Naive thymus-derived CD4-positive, alpha-beta T cell (primary cell): ENCODE measurements at regions of chr22 and their contacts with region 1.

Region 1: GRCh38 chr22:41966607-41967240 is 2.5 kb upstream of the SEPTIN3 start:
- DNase-seq: peak in 6 of 9 donors; percentile 20 to 59 (median 48)
- ATAC-seq: peak; percentile 84
- H3K4me3 ChIP-seq: no peak overlapping the region
- H3K4me3 Mint-ChIP-seq: no peak overlapping the region
- H3K27ac ChIP-seq: no peak overlapping the region
- H3K27ac Mint-ChIP-seq: peak overlapping the region in 1 of 9 donors; percentile 72
- H3K4me1 ChIP-seq: no peaks in the 10 kb centered on the region
- H3K4me1 Mint-ChIP-seq: peaks cover 0 to 9% (median 0%) of the 10 kb centered on the region in 7 donors
- H3K27me3 ChIP-seq: no peaks in the 10 kb centered on the region
- H3K27me3 Mint-ChIP-seq: peaks cover 0 to 9% (median 0%) of the 10 kb centered on the region in 5 donors

Region 2: GRCh38 chr22:41995211-41995610 is 28.5 kb after region 1 on chr22:
- CTCF ChIA-PET with region 1: no interaction called
- POLR2A ChIA-PET with region 1: no interaction called
- intact Hi-C with region 1: no loop called
- DNase-seq: no peak
- ATAC-seq: no peak
- H3K4me3 ChIP-seq: no peak overlapping the region
- H3K4me3 Mint-ChIP-seq: no peak overlapping the region
- H3K27ac ChIP-seq: no peak overlapping the region
- H3K27ac Mint-ChIP-seq: peak overlapping the region in 2 of 9 donors; percentile 15 to 25
- H3K4me1 ChIP-seq: peaks cover 6 to 7% of the 10 kb centered on the region in 2 donors
- H3K4me1 Mint-ChIP-seq: peaks cover 9 to 26% (median 21%) of the 10 kb centered on the region in 7 donors
- H3K27me3 ChIP-seq: no peaks in the 10 kb centered on the region
- H3K27me3 Mint-ChIP-seq: peaks cover 0 to 9% (median 0%) of the 10 kb centered on the region in 5 donors

Region 3: DNA sequence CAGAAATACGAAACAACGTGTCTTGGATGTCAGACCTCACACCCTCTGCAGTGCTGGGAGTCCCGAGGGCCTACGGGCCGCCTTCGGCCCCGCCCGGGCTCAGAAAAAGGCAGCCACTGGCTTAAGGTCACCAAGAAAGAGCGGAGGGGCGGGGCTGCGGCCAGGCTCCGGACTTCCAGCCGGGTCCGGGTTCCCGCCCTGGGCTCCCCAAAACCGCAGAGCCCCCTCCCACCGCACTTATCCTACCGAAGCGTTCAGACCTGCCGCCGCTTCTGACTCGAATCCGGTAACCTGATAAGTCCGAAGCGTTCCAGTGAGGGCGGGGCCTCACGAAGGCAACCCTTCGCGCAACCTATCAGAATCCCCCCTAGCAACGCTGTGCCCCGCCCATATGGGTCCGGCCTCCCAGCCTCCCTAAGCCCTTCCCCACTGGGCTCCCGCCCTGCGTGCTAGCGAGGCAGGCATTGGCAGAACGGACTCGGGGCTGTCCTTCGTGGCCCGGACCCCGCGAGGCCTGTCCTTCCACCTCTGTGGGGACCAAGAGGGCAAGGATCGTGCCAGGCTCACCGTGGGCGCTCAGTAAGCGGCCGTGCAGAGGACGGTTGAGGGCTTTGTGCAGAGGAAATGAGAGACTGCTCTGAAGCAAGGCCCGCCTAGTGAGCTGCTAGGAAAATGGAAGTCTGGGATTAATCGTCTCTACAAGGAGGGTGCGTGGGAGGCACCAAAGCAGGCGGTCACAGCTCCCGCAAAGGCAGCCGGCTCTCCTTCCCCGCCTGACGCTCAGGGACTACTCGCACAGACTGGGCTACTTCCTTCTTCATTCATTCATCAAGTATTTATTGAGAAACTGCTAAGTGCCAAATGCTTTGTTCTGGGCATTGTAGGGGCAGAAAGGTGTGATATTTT is 104.0 kb after region 1 on chr22 and contains the start of gene NAGA:
- CTCF ChIA-PET with region 1: no interaction called
- POLR2A ChIA-PET with region 1: no interaction called
- intact Hi-C with region 1: loop called (anchors 2 to 5 kb)
- DNase-seq: peak; percentile 79 to 91 (median 88)
- ATAC-seq: peak; percentile 99
- H3K4me3 ChIP-seq: peak within 1 kb of the TSS; percentile 75
- H3K4me3 Mint-ChIP-seq: peak within 1 kb of the TSS; percentile 86 to 96 (median 94)
- H3K27ac ChIP-seq: peak within 1 kb of the TSS; percentile 75
- H3K27ac Mint-ChIP-seq: peak within 1 kb of the TSS; percentile 81 to 94 (median 92)
- H3K4me1 ChIP-seq: peaks cover 16 to 22% of the 10 kb centered on the region in 2 donors
- H3K4me1 Mint-ChIP-seq: peaks cover 22 to 54% (median 45%) of the 10 kb centered on the region in 7 donors
- H3K27me3 ChIP-seq: no peaks in the 10 kb centered on the region
- H3K27me3 Mint-ChIP-seq: no peaks in the 10 kb centered on the region
- total RNA-seq, gene NAGA: 7.6 to 38.8 (median 9.4) TPM

Region 4: GRCh38 chr22:42079319-42080251 is 112.9 kb after region 1 on chr22 and contains the start of gene SMDT1:
- CTCF ChIA-PET with region 1: no interaction called
- POLR2A ChIA-PET with region 1: no interaction called
- intact Hi-C with region 1: loop called (anchors 2 to 5 kb)
- DNase-seq: peak; percentile 96 to 100 (median 99)
- ATAC-seq: peak; percentile 94
- H3K4me3 ChIP-seq: peak within 1 kb of the TSS; percentile 98
- H3K4me3 Mint-ChIP-seq: peak within 1 kb of the TSS; percentile 94 to 99 (median 96)
- H3K27ac ChIP-seq: peak within 1 kb of the TSS; percentile 97
- H3K27ac Mint-ChIP-seq: peak within 1 kb of the TSS; percentile 96 to 99 (median 99)
- H3K4me1 ChIP-seq: peaks cover 10 to 16% of the 10 kb centered on the region in 2 donors
- H3K4me1 Mint-ChIP-seq: peaks cover 9 to 52% (median 43%) of the 10 kb centered on the region in 7 donors
- H3K27me3 ChIP-seq: no peaks in the 10 kb centered on the region
- H3K27me3 Mint-ChIP-seq: no peaks in the 10 kb centered on the region
- total RNA-seq, gene SMDT1: 40.4 to 105 (median 98.8) TPM

Region 5: DNA sequence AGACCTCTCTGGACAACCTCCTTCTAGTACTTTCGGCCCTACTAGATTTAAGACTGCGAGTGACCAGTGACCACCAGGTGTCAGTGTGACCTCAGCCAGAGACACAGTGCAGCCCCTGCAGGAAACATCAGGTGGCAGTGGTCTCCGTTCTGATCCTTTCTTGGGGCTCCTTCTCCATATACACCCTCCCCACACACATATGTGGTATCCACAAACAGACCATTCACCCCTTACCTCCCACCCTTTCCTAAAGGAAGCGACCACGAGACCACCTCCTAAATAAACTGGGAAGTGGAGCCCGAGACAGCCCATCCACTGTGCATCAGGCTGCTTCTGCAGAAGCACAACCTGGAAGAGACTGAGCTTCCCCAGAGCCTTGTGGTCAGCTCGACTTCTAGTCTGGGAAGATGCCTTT is 202.3 kb after region 1 on chr22:
- CTCF ChIA-PET with region 1: interaction called, 5 read pairs
- POLR2A ChIA-PET with region 1: no interaction called
- intact Hi-C with region 1: loop called in 1 of 2 experiments (anchors 1 kb)
- DNase-seq: peak; percentile 36 to 77 (median 60)
- ATAC-seq: peak; percentile 89
- H3K4me3 ChIP-seq: no peak overlapping the region
- H3K4me3 Mint-ChIP-seq: no peak overlapping the region
- H3K27ac ChIP-seq: no peak overlapping the region
- H3K27ac Mint-ChIP-seq: peak overlapping the region in 1 of 9 donors; percentile 31
- H3K4me1 ChIP-seq: peaks cover 0 to 15% of the 10 kb centered on the region in 2 donors
- H3K4me1 Mint-ChIP-seq: peaks cover 13 to 39% (median 33%) of the 10 kb centered on the region in 7 donors
- H3K27me3 ChIP-seq: no peaks in the 10 kb centered on the region
- H3K27me3 Mint-ChIP-seq: no peaks in the 10 kb centered on the region

Region 6: GRCh38 chr22:42313804-42314581 is 347.3 kb after region 1 on chr22:
- CTCF ChIA-PET with region 1: no interaction called
- POLR2A ChIA-PET with region 1: no interaction called
- intact Hi-C with region 1: loop called in 1 of 2 experiments (anchors 1 kb)
- DNase-seq: peak in 8 of 9 donors; percentile 34 to 73 (median 60)
- ATAC-seq: peak; percentile 75
- H3K4me3 ChIP-seq: no peak overlapping the region
- H3K4me3 Mint-ChIP-seq: peak overlapping the region in 9 of 10 donors; percentile 21 to 76 (median 68)
- H3K27ac ChIP-seq: no peak overlapping the region
- H3K27ac Mint-ChIP-seq: peak overlapping the region in 8 of 9 donors; percentile 43 to 95 (median 88)
- H3K4me1 ChIP-seq: peaks cover 23 to 46% of the 10 kb centered on the region in 2 donors
- H3K4me1 Mint-ChIP-seq: peaks cover 28 to 62% (median 52%) of the 10 kb centered on the region in 7 donors
- H3K27me3 ChIP-seq: no peaks in the 10 kb centered on the region
- H3K27me3 Mint-ChIP-seq: no peaks in the 10 kb centered on the region

Region 7: DNA sequence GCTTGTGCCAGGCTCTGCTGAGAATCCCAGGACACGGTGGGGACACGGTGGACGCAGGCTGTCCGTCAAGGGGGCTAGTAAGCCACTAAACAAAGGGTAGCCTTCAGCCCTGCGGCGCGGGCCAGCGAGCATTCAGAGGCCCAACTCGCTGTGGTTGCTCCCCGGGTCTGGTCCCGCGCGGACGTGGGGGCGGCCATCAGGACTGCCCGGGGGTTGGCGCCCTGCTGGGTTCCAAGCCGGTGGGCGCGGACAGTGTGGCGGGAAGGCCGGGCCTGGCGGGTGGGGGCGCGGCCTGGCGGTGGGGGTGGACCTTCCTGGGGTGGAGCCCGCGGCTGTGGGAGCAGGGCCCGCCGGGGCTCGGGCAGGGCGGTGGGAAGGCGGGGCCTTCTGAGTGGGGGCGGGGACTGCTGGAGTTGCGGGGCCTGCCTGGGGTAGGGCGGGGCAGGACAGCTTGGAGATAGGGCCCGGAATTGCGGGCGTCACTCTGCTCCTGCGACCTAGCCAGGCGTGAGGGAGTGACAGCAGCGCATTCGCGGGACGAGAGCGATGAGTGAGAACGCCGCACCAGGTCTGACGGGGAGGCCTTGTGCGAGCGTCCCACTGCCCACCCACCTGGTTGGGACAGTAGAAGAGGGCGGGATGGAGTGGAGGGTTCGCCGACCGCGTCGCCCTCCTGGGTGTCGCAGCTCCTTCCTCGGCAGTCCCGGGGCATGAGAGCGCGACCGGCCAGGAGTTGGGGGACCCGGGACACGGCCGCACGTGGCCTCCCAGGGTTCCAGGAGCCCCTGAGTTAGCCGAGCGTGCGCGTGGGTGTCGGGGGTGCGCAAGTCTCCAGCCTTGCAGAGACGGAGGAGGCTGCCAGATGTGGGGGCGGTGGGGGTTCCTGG is 587.0 kb after region 1 on chr22 and contains the start of gene SERHL2:
- CTCF ChIA-PET with region 1: no interaction called
- POLR2A ChIA-PET with region 1: no interaction called
- intact Hi-C with region 1: loop called in 1 of 2 experiments (anchors 2 kb)
- DNase-seq: peak; percentile 59 to 92 (median 77)
- ATAC-seq: peak; percentile 97
- H3K4me3 ChIP-seq: peak within 1 kb of the TSS; percentile 77
- H3K4me3 Mint-ChIP-seq: peak within 1 kb of the TSS; percentile 69 to 92 (median 84)
- H3K27ac ChIP-seq: peak within 1 kb of the TSS; percentile 47
- H3K27ac Mint-ChIP-seq: peak within 1 kb of the TSS in 6 of 9 donors; percentile 30 to 55 (median 48)
- H3K4me1 ChIP-seq: peaks cover 0 to 4% of the 10 kb centered on the region in 2 donors
- H3K4me1 Mint-ChIP-seq: peaks cover 0 to 16% (median 9%) of the 10 kb centered on the region in 7 donors
- H3K27me3 ChIP-seq: no peaks in the 10 kb centered on the region
- H3K27me3 Mint-ChIP-seq: peaks cover 0 to 4% (median 0%) of the 10 kb centered on the region in 5 donors
- total RNA-seq, gene SERHL2: 0.27 to 1.0 (median 0.82) TPM in 4 of 5 experiments, not detected in the other